HEK293T (cell line): ENCODE measurements at regions of chr4 and their contacts with region 1.

Region 1: GRCh38 chr4:185395956-185396723 is 416 bp upstream of the LRP2BP start:
- DNase-seq: peak; percentile 93

Region 2: DNA sequence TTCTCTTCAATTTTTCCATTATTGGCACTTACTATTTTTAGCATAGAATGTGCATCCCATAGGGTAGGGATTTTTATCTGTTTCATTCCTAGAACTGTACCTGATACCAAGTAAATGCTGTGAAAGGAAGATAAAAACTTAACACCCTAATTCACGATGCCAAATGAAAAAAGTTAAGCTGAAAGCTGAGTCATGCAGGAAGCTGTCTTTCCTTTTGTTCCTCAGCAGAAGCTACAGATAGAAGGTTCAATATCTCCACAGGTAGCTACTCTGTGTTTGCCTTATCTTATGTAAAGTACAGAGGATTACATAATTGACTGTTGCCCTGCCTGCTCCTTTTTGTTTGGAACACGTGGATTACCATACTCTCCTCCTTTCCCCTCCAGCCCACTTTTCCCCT is 77.5 kb before region 1 on chr4:
- CTCF ChIA-PET with region 1: no interaction called
- POLR2A ChIA-PET with region 1: no interaction called
- DNase-seq: no peak

Region 3: DNA sequence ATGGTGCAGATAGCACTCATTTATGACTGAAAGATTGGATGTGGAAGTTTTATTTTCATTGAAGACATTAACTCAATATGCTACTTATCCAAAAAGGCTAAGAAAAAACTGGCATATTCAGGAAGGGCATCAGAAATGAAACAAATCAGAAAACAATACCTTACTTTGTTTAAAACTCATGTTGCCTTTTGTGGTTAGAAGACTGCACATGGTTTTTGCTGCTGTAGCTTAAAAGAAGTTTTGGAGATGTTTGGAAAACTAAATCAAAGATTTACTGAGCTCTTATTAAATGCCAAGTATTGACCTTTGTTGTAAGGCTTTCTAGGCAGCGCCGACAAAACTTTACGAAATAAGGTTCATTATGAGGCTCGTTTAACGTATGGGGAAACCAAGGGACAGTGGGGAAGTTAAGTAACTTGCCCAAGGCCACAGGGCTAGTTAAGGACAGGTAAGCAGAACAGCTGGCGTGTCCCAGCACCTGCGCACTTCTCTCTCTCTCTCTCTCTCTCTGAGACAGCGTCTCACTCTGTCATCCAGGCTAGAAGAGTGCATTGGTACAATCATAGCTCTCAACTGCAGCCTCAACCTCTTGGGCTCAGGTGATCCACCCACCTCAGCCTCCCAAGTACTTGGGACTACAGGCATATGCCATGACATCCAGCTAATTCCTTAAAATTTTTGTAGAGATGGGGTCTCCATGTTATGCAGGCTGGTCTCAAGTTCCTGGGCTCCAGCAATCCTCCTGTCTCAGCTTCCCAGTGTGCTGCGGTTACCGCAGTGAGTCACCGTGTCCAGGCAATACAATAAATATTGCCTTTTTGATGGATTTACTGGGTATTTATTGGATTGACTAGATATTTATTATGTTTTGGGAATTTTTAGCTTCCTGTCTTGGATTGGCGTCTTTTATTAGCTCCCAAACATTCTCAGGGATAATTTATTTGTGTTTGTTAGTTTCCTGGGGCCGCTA is 16.5 kb before region 1 on chr4:
- CTCF ChIA-PET with region 1: no interaction called
- POLR2A ChIA-PET with region 1: interaction called, 29 read pairs
- DNase-seq: no peak

Region 4: GRCh38 chr4:185384930-185385331 is 11.2 kb before region 1 on chr4:
- CTCF ChIA-PET with region 1: interaction called, 3 read pairs
- POLR2A ChIA-PET with region 1: interaction called, 29 read pairs
- DNase-seq: no peak

Region 5: GRCh38 chr4:185425647-185426352 is 29.7 kb after region 1 on chr4 and contains the start of gene UFSP2:
- CTCF ChIA-PET with region 1: no interaction called
- POLR2A ChIA-PET with region 1: interaction called, 10 read pairs
- DNase-seq: peak; percentile 79

Region 6: DNA sequence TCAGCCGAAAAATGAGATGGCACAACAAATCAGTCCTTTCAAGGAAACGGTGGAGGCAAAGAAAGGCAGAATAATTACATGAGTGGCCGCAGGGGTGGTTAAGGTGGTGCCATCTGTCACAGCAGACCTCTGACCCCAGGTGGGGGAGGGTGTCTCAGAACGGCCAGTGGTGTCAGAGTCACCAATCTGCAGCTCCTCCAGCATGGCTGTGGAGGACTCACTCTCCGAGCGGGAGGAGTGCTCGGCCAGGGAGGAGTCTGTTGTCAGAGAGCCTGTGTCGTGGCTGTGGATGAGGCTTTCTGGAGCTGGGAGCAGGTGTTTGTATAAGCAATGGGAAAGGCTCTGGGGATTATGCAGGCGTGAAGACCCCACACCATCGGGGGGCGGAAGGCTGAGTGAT is 269.5 kb after region 1 on chr4:
- CTCF ChIA-PET with region 1: no interaction called
- POLR2A ChIA-PET with region 1: no interaction called
- DNase-seq: no peak